H1 (cell line): ENCODE measurements at regions of chr19 and their contacts with region 1.

Region 1: DNA sequence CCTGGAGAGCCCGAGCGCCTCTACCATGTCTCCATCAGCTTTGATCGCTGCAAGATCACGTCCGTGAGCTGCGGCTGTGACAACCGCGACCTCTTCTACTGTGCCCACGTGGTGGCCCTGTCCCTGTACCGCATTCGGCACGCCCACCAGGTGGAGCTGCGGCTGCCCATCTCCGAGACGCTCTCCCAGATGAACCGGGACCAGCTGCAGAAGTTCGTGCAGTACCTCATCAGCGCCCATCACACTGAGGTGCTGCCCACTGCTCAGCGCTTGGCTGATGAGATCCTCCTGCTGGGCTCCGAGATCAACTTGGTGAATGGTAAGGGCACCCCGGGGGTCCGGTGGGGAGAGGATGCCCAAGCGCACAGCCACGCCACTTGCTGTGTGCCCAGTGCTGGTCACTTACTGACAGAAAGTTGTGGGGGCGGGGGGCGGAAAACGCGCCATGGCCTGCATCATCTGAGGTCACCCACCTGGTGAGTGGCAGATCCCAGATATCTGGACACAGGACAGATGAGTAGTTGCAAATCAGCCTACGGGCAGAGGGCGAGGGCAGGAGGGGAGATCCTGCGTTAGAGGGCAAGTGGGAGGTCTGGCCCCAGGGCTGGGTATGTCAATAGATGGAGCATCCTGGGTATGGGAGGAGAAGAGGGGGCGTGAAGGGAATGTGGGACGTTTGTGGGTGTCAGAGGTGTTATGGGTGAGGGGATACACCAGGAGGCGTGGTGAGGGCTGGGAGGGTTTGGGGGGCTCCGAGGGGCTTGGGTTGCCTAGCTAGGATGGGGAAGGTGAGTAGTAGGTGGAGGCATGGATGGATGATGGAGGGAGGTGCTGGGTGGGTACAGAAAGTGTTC is 9.8 kb downstream of the ZSWIM4 start:
- DNase-seq: peak in 1 of 2 experiments; percentile 82
- H3K4me3 ChIP-seq: no peak overlapping the region
- H3K27ac ChIP-seq: no peak overlapping the region
- H3K4me1 ChIP-seq: no peaks in the 10 kb centered on the region; a peak in 1 of 7 replicates
- H3K27me3 ChIP-seq: no peaks in the 10 kb centered on the region
- CTCF ChIP-seq: peak; percentile 81 to 92 (median 87)
- EP300 ChIP-seq: no peak
- POLR2A ChIP-seq: no peak
- RAD21 ChIP-seq: peak; percentile 59 to 76

Region 2: GRCh38 chr19:13784731-13785452 is 20.2 kb before region 1 on chr19:
- CTCF ChIA-PET with region 1: interaction called, 10 read pairs
- POLR2A ChIA-PET with region 1: interaction called, 5 read pairs
- DNase-seq: peak in 1 of 2 experiments; percentile 88
- H3K4me3 ChIP-seq: peak overlapping the region in 1 of 4 experiments; percentile 7; a peak in 1 of 8 replicates
- H3K27ac ChIP-seq: 0 out of 2 replicates have a peak overlapping the region, but pooled peaks have one; percentile 11
- H3K4me1 ChIP-seq: peaks cover 0 to 3% (median 2%) of the 10 kb centered on the region in 4 experiments; a peak in 4 of 7 replicates
- H3K27me3 ChIP-seq: no peaks in the 10 kb centered on the region; a peak in 2 of 7 replicates
- CTCF ChIP-seq: peak; percentile 65 to 82 (median 80)
- EP300 ChIP-seq: no peak; a peak in 1 of 3 replicates
- POLR2A ChIP-seq: no peak
- RAD21 ChIP-seq: peak; percentile 78 to 82

Region 3: DNA sequence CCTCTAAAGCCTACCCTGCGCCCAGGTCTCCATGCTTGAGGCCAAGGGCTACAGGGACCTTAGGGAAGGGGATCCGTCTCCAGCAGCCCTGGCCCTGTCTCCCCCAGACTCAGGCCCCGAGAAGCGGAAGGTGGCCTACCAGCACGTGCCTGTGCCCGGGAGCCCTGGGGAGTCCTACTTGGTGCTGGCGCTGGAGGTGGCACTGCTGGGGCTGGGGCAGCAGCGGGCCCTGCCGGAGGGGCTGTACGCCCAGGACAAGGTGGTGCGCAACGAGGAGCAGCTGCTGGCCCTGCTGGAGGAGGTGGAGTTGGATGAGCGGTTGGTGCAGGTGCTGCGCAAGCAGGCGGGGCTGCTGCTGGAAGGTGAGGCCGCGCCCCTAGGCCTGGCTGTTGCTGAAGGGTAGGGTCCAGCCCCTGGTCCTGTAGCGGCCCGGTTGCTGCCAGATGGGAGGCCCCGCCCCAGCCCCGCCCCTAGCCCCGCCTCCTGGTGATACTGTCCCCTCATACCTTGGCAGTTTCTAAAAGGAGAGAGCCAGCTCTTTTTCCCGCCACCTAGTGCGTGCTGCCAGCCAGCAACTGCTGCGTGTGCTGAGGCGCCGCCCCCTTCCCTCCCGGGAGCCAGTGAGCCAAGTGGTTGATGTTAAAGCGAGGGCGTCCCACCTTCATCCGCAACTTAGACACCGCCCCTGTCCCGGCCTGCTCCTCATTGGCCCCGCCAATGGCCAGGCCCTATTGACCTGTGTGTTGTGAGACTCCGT is 12.7 kb after region 1 on chr19:
- CTCF ChIA-PET with region 1: interaction called, 20 read pairs
- POLR2A ChIA-PET with region 1: interaction called, 34 read pairs
- DNase-seq: peak; percentile 93 to 98
- H3K4me3 ChIP-seq: peak overlapping the region; percentile 49 to 75 (median 58)
- H3K27ac ChIP-seq: peak overlapping the region; percentile 93
- H3K4me1 ChIP-seq: peaks cover 0 to 5% (median 4%) of the 10 kb centered on the region in 4 experiments; a peak in 5 of 7 replicates
- H3K27me3 ChIP-seq: no peaks in the 10 kb centered on the region
- CTCF ChIP-seq: no peak
- EP300 ChIP-seq: peak in 1 of 2 experiments; percentile 64; a peak in 1 of 3 replicates
- POLR2A ChIP-seq: peak; percentile 69 to 75
- RAD21 ChIP-seq: peak in 1 of 2 experiments; percentile 4; a peak in 1 of 4 replicates

Region 4: DNA sequence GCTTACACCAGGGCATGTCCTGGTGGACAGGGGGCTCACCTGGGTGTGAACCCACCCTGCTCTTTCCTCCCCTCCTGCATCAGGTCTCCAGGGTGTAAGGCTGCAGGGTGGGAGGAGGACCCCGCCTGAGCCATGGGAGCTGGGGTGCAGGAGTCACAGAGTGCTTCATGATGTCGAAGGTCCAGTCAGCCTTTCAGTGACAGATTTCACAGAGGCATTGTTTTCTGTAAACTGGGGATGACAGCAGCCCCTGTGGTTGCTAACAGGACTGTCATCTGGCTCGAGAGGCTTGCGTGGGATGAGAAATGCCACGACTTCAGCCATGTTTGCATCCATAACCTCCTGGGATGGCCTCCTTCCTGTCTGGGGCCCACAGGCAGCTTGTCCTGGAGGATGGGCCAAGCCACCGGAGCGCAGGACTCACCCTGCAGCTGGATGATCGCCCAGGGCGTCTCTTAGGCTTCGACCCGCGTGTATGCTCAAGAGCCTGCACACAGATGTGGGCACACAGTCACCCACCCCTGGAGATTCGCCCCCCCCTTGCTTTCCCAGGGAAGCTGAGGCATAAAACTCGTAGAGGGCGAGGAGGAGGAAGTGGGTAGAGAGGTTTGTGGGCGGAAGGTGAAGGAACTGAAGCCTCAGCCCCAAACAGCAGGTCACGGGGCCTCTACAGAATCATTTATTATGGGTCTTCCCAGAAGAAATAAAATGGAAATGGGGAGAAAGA is 76.8 kb after region 1 on chr19:
- CTCF ChIA-PET with region 1: no interaction called
- POLR2A ChIA-PET with region 1: no interaction called
- DNase-seq: no peak
- H3K4me3 ChIP-seq: peak overlapping the region in 1 of 4 experiments; percentile 5; a peak in 1 of 8 replicates
- H3K27ac ChIP-seq: peak overlapping the region; percentile 42; the same call in 1 of the 2 replicates
- H3K4me1 ChIP-seq: peaks cover 6 to 23% (median 16%) of the 10 kb centered on the region in 4 experiments
- H3K27me3 ChIP-seq: peaks cover 0 to 8% (median 3%) of the 10 kb centered on the region in 4 experiments; a peak in 4 of 7 replicates
- CTCF ChIP-seq: no peak
- EP300 ChIP-seq: no peak
- POLR2A ChIP-seq: no peak
- RAD21 ChIP-seq: no peak